Activated T-helper 2 cell treated with anti-CD3 and anti-CD28 coated beads, Interferon-gamma antibody, Interleukin-2, Interleukin-4, amounts not matched to agents 10 μg/mL and 5 μg/mL and 100 μg/mL, durations not matched to agents 14 hours and 24 hours and 36 hours (primary cell): ENCODE measurements at regions of chr20 and their contacts with region 1.

Region 1: GRCh38 chr20:10357974-10358373 is 76.0 kb downstream of the MKKS start:
- DNase-seq: no peak
- H3K4me3 Mint-ChIP-seq: no peak overlapping the region
- H3K27ac Mint-ChIP-seq: no peak overlapping the region
- H3K4me1 Mint-ChIP-seq: peaks cover 14% of the 10 kb centered on the region
- H3K27me3 Mint-ChIP-seq: peaks cover 4% of the 10 kb centered on the region

Region 2: DNA sequence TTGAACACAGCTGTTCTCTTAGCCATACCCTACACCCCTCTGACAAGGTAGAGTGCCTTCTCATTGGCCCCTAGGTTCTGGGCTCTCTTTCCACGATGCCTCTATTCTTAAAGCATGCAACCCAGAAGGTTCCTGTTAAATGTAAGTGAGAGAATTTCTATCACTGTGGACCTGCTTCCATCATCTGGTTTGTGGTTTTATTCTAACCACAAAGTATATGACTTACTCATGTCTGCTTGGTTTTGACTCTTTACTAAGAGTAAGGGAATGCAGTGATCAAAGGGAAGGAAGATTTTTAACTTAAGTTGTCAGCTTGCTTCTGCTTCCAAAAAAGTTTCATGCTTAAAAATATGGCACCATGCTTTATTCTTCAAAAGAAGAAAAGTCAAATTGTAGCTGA is 243.0 kb before region 1 on chr20:
- intact Hi-C with region 1: loop called (anchors 10 kb)
- DNase-seq: no peak
- H3K4me3 Mint-ChIP-seq: no peak overlapping the region
- H3K27ac Mint-ChIP-seq: no peak overlapping the region
- H3K4me1 Mint-ChIP-seq: peaks cover 18% of the 10 kb centered on the region
- H3K27me3 Mint-ChIP-seq: no peaks in the 10 kb centered on the region

Region 3: GRCh38 chr20:10316582-10316981 is 41.4 kb before region 1 on chr20:
- intact Hi-C with region 1: loop called (anchors 5 kb)
- DNase-seq: no peak
- H3K4me3 Mint-ChIP-seq: no peak overlapping the region
- H3K27ac Mint-ChIP-seq: no peak overlapping the region
- H3K4me1 Mint-ChIP-seq: peaks cover 14% of the 10 kb centered on the region
- H3K27me3 Mint-ChIP-seq: peaks cover 33% of the 10 kb centered on the region

Region 4: GRCh38 chr20:10511509-10512251 is 153.7 kb after region 1 on chr20:
- intact Hi-C with region 1: loop called (anchors 5 kb)
- DNase-seq: peak; percentile 67
- H3K4me3 Mint-ChIP-seq: peak overlapping the region; percentile 9
- H3K27ac Mint-ChIP-seq: peak overlapping the region; percentile 75
- H3K4me1 Mint-ChIP-seq: peaks cover 57% of the 10 kb centered on the region
- H3K27me3 Mint-ChIP-seq: no peaks in the 10 kb centered on the region